HEK293 (cell line): ENCODE measurements at regions of chr11 and their contacts with region 1.

Region 1: GRCh38 chr11:65329944-65330403 is 3.7 kb upstream of the DPF2 start:
- H3K4me3 ChIP-seq: no peak overlapping the region
- H3K27ac ChIP-seq: no peak overlapping the region
- H3K4me1 ChIP-seq: no peaks in the 10 kb centered on the region
- CTCF ChIP-seq: no peak

Region 2: GRCh38 chr11:65261591-65262380 is 68.2 kb before region 1 on chr11 and contains the start of gene POLA2:
- CTCF ChIA-PET with region 1: interaction called, 14 read pairs
- POLR2A ChIA-PET with region 1: interaction called, 24 read pairs
- H3K4me3 ChIP-seq: peak within 1 kb of the TSS; percentile 79
- H3K27ac ChIP-seq: peak within 1 kb of the TSS; percentile 70
- H3K4me1 ChIP-seq: no peaks in the 10 kb centered on the region
- CTCF ChIP-seq: no peak

Region 3: GRCh38 chr11:65290448-65291165 is 39.4 kb before region 1 on chr11:
- CTCF ChIA-PET with region 1: interaction called, 14 read pairs
- POLR2A ChIA-PET with region 1: no interaction called
- H3K4me3 ChIP-seq: no peak overlapping the region
- H3K27ac ChIP-seq: no peak overlapping the region
- H3K4me1 ChIP-seq: no peaks in the 10 kb centered on the region
- CTCF ChIP-seq: no peak

Region 4: DNA sequence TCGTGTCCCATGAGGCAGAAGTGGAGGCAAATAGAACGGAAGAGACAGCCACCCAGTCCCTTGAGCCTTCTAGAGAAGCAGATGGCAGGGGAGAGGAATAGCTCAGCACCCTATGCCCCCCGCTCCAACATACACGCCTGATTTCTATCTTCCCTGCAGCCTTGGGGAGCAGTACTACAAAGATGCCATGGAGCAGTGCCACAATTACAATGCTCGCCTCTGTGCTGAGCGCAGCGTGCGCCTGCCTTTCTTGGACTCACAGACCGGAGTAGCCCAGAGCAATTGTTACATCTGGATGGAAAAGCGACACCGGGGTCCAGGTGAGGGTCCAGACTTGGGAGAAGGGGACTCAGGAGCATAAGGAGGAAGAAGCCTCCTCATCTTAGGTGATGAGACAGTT is 10.3 kb after region 1 on chr11:
- CTCF ChIA-PET with region 1: interaction called, 18 read pairs
- POLR2A ChIA-PET with region 1: interaction called, 4 read pairs
- H3K4me3 ChIP-seq: no peak overlapping the region
- H3K27ac ChIP-seq: no peak overlapping the region
- H3K4me1 ChIP-seq: no peaks in the 10 kb centered on the region
- CTCF ChIP-seq: no peak

Region 5: GRCh38 chr11:65506770-65507505 is 177.0 kb after region 1 on chr11:
- CTCF ChIA-PET with region 1: interaction called, 15 read pairs
- POLR2A ChIA-PET with region 1: interaction called, 9 read pairs
- H3K4me3 ChIP-seq: peak overlapping the region; percentile 27
- H3K27ac ChIP-seq: peak overlapping the region; percentile 24; the same call in 1 of the 2 replicates
- H3K4me1 ChIP-seq: no peaks in the 10 kb centered on the region
- CTCF ChIP-seq: no peak